Endothelial cell of umbilical vein (primary cell): ENCODE measurements at regions of chr1 and their contacts with region 1.

Region 1: GRCh38 chr1:16386454-16387113 is 19.5 kb downstream of the SZRD1 start:
- DNase-seq: peak; percentile 71
- H3K4me3 ChIP-seq: no peak overlapping the region
- H3K27ac ChIP-seq: no peak overlapping the region
- H3K4me1 ChIP-seq: peaks cover 21% of the 10 kb centered on the region
- H3K27me3 ChIP-seq: no peaks in the 10 kb centered on the region
- CTCF ChIP-seq: no peak
- POLR2A ChIP-seq: no peak

Region 2: DNA sequence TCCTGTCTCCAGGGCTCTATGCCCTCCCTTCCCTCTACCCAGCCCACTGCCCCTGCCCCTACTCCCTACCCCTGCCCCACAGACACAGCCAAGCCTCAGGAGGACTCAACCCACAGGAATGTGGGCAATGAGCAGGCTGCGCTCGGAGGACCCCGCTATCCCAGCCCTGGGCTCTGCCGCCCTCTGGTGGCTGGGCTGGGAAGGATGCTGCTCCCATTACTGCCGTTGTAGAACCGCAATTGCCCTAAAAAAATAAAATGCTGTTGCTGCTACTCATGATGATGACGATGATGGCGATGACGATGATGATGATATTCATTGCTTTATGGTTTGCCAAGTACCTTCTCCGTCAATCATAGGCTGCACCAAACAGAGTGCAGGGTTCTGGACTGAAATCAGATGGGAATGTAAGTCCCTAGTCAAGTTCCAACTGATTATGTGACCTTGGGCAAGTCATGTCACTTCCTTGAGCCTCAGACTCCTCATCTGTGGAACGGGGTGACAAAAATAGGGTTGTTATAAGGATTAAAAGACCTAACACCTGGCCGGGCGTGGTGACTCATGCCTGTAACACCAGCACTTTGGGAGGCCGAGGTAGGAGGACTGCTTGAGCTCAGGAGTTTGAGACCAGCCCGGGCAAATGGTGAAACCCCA is 198.7 kb before region 1 on chr1:
- CTCF ChIA-PET with region 1: no interaction called
- POLR2A ChIA-PET with region 1: no interaction called
- dilution Hi-C with region 1: no loop called
- intact Hi-C with region 1: no loop called
- DNase-seq: peak; percentile 85
- H3K4me3 ChIP-seq: no peak overlapping the region
- H3K27ac ChIP-seq: no peak overlapping the region
- H3K4me1 ChIP-seq: peaks cover 5% of the 10 kb centered on the region
- H3K27me3 ChIP-seq: no peaks in the 10 kb centered on the region
- CTCF ChIP-seq: peak; percentile 93 to 95
- POLR2A ChIP-seq: no peak

Region 3: GRCh38 chr1:16375521-16376359 is 10.8 kb before region 1 on chr1:
- CTCF ChIA-PET with region 1: interaction called, 15 read pairs
- POLR2A ChIA-PET with region 1: interaction called, 5 read pairs
- dilution Hi-C with region 1: no loop called
- intact Hi-C with region 1: loop called (anchors 1 kb)
- DNase-seq: peak; percentile 90
- H3K4me3 ChIP-seq: peak overlapping the region in 1 of 3 experiments; percentile 2
- H3K27ac ChIP-seq: peak overlapping the region; percentile 85
- H3K4me1 ChIP-seq: peaks cover 62% of the 10 kb centered on the region
- H3K27me3 ChIP-seq: no peaks in the 10 kb centered on the region
- CTCF ChIP-seq: no peak
- POLR2A ChIP-seq: peak; percentile 58

Region 4: DNA sequence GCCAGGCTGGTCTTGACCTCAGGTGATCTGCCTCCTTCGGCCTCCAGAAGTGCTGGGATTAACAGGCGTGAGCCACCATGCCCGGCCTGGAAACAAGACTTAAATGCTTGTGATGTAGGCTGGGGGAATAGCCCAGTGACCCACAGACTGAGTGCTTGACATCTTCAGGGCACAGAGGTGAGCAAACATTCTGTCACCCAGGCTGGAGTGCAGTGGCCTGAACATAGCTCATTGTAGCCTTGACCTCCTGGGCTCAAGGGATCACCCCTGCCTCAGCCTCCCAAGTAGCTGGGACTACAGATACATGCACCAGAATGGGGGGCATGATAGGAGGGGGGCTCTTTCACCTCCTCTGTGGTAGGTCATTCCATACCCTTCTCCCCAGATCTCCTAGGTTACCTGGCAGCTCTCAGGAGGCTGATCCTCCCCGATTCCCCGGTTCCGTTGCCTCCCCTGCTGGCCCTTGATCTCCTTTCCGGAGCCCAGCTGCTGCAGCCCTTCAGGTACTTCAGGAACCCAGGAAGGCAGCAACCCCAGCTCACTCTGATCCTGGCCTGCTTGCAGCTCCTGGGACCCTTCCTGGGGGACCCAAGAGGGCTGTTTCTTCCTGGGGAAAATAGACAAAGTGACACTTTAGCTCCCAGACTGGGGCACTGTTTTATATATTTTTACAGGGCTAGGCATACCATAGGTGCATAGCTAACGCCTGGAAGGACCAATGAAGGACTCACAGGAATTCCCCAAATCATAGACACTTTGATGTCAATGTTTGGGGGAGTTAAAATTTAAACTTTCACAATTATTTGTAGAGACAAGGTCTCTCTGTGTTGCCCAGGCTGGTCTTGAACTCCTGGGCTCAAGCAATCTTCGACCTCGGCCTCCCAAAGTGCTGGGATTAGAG is 38.8 kb after region 1 on chr1:
- CTCF ChIA-PET with region 1: no interaction called
- POLR2A ChIA-PET with region 1: no interaction called
- dilution Hi-C with region 1: no loop called
- intact Hi-C with region 1: loop called (anchors 1 kb)
- DNase-seq: no peak
- H3K4me3 ChIP-seq: no peak overlapping the region
- H3K27ac ChIP-seq: no peak overlapping the region
- H3K4me1 ChIP-seq: no peaks in the 10 kb centered on the region
- H3K27me3 ChIP-seq: no peaks in the 10 kb centered on the region
- CTCF ChIP-seq: no peak
- POLR2A ChIP-seq: no peak

Region 5: DNA sequence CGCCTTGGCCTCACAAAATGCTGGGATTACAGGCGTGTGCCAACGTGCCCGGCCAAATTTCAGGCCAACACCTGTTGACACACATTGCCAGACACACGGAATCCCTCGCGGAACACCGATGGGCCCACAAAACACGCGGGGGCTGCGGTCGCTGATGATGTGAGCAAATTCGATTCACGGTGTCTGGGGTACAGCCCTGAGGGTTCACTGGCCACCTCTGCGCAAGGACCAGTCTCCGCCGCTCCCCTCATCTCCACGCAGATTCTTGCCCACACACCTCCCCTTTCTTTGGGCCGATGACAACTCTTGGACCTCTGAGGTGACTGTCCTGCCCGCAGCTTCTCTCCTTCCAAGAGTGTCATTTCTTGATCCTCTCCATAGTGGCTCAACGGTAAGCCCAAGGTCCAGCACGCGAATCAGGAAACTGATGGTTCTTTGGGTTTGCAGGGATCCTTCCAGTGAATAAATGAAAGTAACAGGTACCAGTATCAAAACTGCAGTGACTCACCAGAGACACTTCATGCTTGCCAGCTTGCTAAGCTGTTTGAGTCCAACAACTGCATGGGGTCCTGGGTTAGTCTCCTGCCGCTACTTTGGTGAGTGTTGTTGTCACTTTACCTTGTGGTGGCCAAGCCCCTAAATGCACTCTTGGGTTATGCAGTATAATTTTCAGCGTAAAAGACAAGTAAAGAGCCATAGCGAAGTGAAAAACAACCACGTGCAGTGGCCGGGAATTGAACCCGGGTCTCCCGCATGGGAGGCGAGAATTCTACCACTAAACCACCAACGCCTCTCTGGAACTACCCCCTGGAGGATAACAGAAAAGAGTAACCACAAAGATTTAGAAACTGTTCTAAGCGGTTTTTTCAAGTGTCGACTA is 291.2 kb after region 1 on chr1:
- CTCF ChIA-PET with region 1: no interaction called
- POLR2A ChIA-PET with region 1: no interaction called
- dilution Hi-C with region 1: no loop called
- intact Hi-C with region 1: no loop called
- DNase-seq: peak; percentile 47
- H3K4me3 ChIP-seq: no peak overlapping the region
- H3K27ac ChIP-seq: no peak overlapping the region
- H3K4me1 ChIP-seq: no peaks in the 10 kb centered on the region
- H3K27me3 ChIP-seq: peaks cover 10 to 13% of the 10 kb centered on the region in 2 experiments
- CTCF ChIP-seq: no peak
- POLR2A ChIP-seq: no peak